A673 (cell line): ENCODE measurements at regions of chr4 and their contacts with region 1.

Region 1: GRCh38 chr4:165716472-165716871 is 156.6 kb upstream of the TLL1 start:
- DNase-seq: peak; percentile 86
- H3K4me3 ChIP-seq: no peak overlapping the region
- H3K27ac ChIP-seq: no peak overlapping the region
- H3K4me1 ChIP-seq: peaks cover 39% of the 10 kb centered on the region
- H3K27me3 ChIP-seq: peaks cover 27% of the 10 kb centered on the region
- CTCF ChIP-seq: no peak

Region 2: GRCh38 chr4:165700855-165701254 is 15.6 kb before region 1 on chr4:
- CTCF ChIA-PET with region 1: no interaction called
- POLR2A ChIA-PET with region 1: interaction called, 13 read pairs
- intact Hi-C with region 1: no loop called
- DNase-seq: no peak
- H3K4me3 ChIP-seq: no peak overlapping the region
- H3K27ac ChIP-seq: no peak overlapping the region
- H3K4me1 ChIP-seq: peaks cover 6% of the 10 kb centered on the region
- H3K27me3 ChIP-seq: no peaks in the 10 kb centered on the region
- CTCF ChIP-seq: peak; percentile 45; the same call in 1 of the 2 replicates

Region 3: DNA sequence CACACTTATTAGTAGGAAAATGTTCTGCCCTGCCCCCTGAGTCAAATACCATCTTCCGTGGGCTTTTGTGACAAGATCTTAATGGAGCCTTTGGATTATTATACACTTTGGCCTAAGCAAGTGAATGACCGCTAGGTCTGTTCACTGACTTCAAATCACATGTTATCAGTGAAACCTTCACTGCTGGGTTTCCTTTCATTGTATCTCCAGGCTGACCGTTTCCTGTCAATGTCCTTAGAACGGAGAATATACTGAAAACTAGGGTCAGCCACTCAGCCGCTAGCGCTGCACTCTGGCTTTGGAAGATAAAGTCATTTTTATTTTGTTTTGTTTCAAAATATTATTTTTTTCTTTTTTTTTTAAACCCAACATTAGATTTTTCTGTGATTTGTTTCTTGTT is 49.5 kb after region 1 on chr4:
- CTCF ChIA-PET with region 1: no interaction called
- POLR2A ChIA-PET with region 1: interaction called, 12 read pairs
- intact Hi-C with region 1: no loop called
- DNase-seq: no peak
- H3K4me3 ChIP-seq: no peak overlapping the region
- H3K27ac ChIP-seq: no peak overlapping the region
- H3K4me1 ChIP-seq: no peaks in the 10 kb centered on the region
- H3K27me3 ChIP-seq: no peaks in the 10 kb centered on the region
- CTCF ChIP-seq: no peak

Region 4: GRCh38 chr4:165893311-165893710 is 176.8 kb after region 1 on chr4:
- CTCF ChIA-PET with region 1: no interaction called
- POLR2A ChIA-PET with region 1: no interaction called
- intact Hi-C with region 1: no loop called
- DNase-seq: no peak
- H3K4me3 ChIP-seq: no peak overlapping the region
- H3K27ac ChIP-seq: no peak overlapping the region
- H3K4me1 ChIP-seq: no peaks in the 10 kb centered on the region
- H3K27me3 ChIP-seq: no peaks in the 10 kb centered on the region
- CTCF ChIP-seq: no peak